ENCODE measurements at regions of chr18 and their contacts with region 1.

Region 1: GRCh38 chr18:49447810-49448745 is 12.4 kb downstream of the DYM start:
- DNase-seq: peak; percentile 12 to 49
- H3K4me3 ChIP-seq: no peak overlapping the region
- H3K27ac ChIP-seq: no peak overlapping the region
- H3K4me1 ChIP-seq: no peaks in the 10 kb centered on the region
- H3K27me3 ChIP-seq: no peaks in the 10 kb centered on the region
- CTCF ChIP-seq: peak; percentile 79

Region 2: GRCh38 chr18:48649231-48649630 is 798.8 kb before region 1 on chr18:
- CTCF ChIA-PET with region 1: interaction called, 12 read pairs
- POLR2A ChIA-PET with region 1: no interaction called
- intact Hi-C with region 1: no loop called
- DNase-seq: no peak
- H3K4me3 ChIP-seq: no peak overlapping the region
- H3K27ac ChIP-seq: no peak overlapping the region
- H3K4me1 ChIP-seq: no peaks in the 10 kb centered on the region
- H3K27me3 ChIP-seq: no peaks in the 10 kb centered on the region
- CTCF ChIP-seq: no peak

Region 3: DNA sequence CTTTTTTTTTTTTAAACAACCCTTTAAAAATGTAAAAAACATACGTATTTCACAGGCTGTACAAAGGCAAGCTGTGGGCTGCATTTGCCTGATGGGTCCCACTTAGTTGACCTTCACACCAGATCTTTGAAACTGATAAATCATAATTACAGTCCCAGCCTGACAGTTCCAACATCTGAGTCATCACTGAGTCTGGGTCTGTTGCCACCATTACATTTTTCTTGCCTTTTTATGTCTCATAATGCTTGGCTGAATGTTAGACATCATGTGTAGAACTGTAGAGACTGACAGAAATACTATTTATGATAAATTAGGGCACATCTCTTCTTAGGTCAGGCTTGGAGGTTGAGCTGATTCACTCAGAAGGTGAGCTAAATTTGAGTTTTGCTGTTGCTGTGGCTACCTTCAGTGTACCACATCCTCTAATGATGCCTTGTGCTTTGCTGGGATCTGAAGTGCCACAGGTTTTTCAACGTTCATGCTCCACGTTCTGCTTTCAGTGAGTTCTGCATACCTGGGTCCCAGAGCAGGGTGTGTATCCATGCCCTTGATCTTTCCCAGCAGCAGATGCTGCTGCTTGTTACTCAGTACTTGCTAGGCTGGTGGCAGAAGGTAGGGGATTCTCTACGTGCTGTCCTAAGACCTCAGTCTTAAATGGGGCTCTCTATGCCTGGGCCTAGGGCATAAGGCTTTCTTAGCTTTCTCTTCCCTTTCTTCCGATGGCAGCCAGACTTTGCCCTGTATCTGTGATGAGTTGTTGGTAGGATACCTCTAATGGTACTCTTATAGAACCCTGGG is 336.7 kb before region 1 on chr18:
- CTCF ChIA-PET with region 1: no interaction called
- POLR2A ChIA-PET with region 1: no interaction called
- intact Hi-C with region 1: no loop called
- DNase-seq: peak in 1 of 2 experiments; percentile 42
- H3K4me3 ChIP-seq: no peak overlapping the region
- H3K27ac ChIP-seq: no peak overlapping the region
- H3K4me1 ChIP-seq: peaks cover 11% of the 10 kb centered on the region; the same call in 1 of the 2 replicates
- H3K27me3 ChIP-seq: no peaks in the 10 kb centered on the region
- CTCF ChIP-seq: no peak

Region 4: DNA sequence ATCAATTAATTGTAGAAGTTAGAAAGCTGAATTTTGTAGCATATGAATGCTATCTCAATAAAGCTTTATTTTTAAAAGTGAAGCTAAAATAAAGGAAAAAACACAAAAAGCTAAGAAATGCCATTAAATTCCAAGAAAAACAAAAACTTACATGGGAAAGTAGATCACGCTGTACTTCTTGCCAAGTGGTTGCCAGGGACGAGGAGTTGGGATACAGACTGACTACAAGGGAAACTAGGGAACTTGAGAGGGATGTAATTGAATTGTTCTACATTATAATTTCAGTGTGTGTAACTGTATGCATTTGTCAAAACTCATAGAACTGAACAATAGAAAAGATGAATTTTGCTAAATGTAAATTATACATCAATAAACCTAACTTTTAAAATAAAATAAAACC is 95.8 kb before region 1 on chr18:
- CTCF ChIA-PET with region 1: no interaction called
- POLR2A ChIA-PET with region 1: no interaction called
- intact Hi-C with region 1: no loop called
- DNase-seq: no peak
- H3K4me3 ChIP-seq: no peak overlapping the region
- H3K27ac ChIP-seq: no peak overlapping the region
- H3K4me1 ChIP-seq: no peaks in the 10 kb centered on the region
- H3K27me3 ChIP-seq: no peaks in the 10 kb centered on the region
- CTCF ChIP-seq: no peak